A673 (cell line): ENCODE measurements at regions of chr18 and their contacts with region 1.

Region 1: DNA sequence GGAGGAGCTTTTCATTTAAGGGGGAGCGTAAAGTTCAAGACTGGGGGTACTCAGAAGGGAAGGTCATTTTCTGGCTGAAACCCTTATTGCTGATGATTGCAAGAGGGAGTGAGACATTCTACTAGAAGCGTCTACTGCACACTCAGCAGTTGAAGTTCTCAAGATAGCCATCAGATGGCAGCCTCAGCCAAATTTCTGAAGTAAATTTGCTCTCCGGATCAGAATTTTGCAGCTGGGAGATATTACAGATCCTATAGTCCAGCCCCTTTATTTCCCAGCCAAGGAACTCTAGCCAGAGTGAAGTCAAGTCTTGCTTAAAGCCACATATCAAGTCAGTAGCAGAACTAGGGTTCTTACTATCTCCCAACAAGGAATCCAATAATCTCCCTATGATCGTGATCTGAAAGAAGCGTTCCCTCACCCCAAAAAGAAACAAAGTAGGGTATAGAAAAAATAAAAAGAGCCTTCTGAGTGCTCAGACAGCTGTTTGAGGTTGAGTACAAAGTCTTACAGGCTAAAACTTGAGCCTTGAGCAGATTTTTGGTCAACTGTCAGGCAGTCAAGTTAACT is 24.0 kb downstream of the RAX start:
- DNase-seq: peak; percentile 94
- H3K4me3 ChIP-seq: no peak overlapping the region
- H3K27ac ChIP-seq: peak overlapping the region; percentile 44
- H3K4me1 ChIP-seq: peaks cover 19% of the 10 kb centered on the region
- H3K27me3 ChIP-seq: no peaks in the 10 kb centered on the region
- CTCF ChIP-seq: peak; percentile 86

Region 2: GRCh38 chr18:58776084-58776483 is 473.2 kb before region 1 on chr18:
- CTCF ChIA-PET with region 1: no interaction called
- POLR2A ChIA-PET with region 1: no interaction called
- intact Hi-C with region 1: loop called (anchors 5 kb)
- DNase-seq: peak; percentile 68
- H3K4me3 ChIP-seq: no peak overlapping the region
- H3K27ac ChIP-seq: no peak overlapping the region
- H3K4me1 ChIP-seq: peaks cover 27% of the 10 kb centered on the region
- H3K27me3 ChIP-seq: no peaks in the 10 kb centered on the region
- CTCF ChIP-seq: no peak

Region 3: GRCh38 chr18:59101830-59102414 is 147.4 kb before region 1 on chr18:
- CTCF ChIA-PET with region 1: interaction called, 3 read pairs
- POLR2A ChIA-PET with region 1: interaction called, 9 read pairs
- intact Hi-C with region 1: loop called (anchors 2 kb)
- DNase-seq: peak; percentile 95
- H3K4me3 ChIP-seq: no peak overlapping the region
- H3K27ac ChIP-seq: peak overlapping the region; percentile 98
- H3K4me1 ChIP-seq: peaks cover 31% of the 10 kb centered on the region
- H3K27me3 ChIP-seq: no peaks in the 10 kb centered on the region
- CTCF ChIP-seq: no peak